Ascending aorta (tissue), 2 donors: ENCODE measurements at regions of chr14 and their contacts with region 1.

Region 1: GRCh38 chr14:92456215-92457015 is 57.2 kb upstream of the RIN3 start:
- DNase-seq: peak in 1 of 2 donors; percentile 77
- H3K4me3 ChIP-seq: no peak overlapping the region
- H3K27ac ChIP-seq: no peak overlapping the region
- H3K4me1 ChIP-seq: peaks cover 2 to 10% of the 10 kb centered on the region in 2 donors
- H3K27me3 ChIP-seq: no peaks in the 10 kb centered on the region
- CTCF ChIP-seq: peak; percentile 72 to 84 (median 79)

Region 2: GRCh38 chr14:92135267-92135666 is 321.1 kb before region 1 on chr14:
- intact Hi-C with region 1: loop called (anchors 1 kb)
- DNase-seq: no peak
- H3K4me3 ChIP-seq: no peak overlapping the region
- H3K27ac ChIP-seq: no peak overlapping the region
- H3K4me1 ChIP-seq: no peaks in the 10 kb centered on the region
- H3K27me3 ChIP-seq: no peaks in the 10 kb centered on the region
- CTCF ChIP-seq: peak; percentile 61 to 64 (median 64)

Region 3: GRCh38 chr14:92323011-92323915 is 133.2 kb before region 1 on chr14 and contains the start of gene SLC24A4:
- intact Hi-C with region 1: loop called (anchors 5 kb)
- DNase-seq: no peak
- H3K4me3 ChIP-seq: peak within 1 kb of the TSS; percentile 70 to 91
- H3K27ac ChIP-seq: peak within 1 kb of the TSS in 1 of 2 donors; percentile 42
- H3K4me1 ChIP-seq: peaks cover 0 to 9% of the 10 kb centered on the region in 2 donors
- H3K27me3 ChIP-seq: no peaks in the 10 kb centered on the region
- CTCF ChIP-seq: no peak
- total RNA-seq, gene SLC24A4: not detected

Region 4: GRCh38 chr14:92680781-92681650 is 224.6 kb after region 1 on chr14:
- intact Hi-C with region 1: loop called (anchors 2 kb)
- DNase-seq: peak; percentile 50 to 86
- H3K4me3 ChIP-seq: no peak overlapping the region
- H3K27ac ChIP-seq: peak overlapping the region in 1 of 2 donors; percentile 65
- H3K4me1 ChIP-seq: no peaks in the 10 kb centered on the region
- H3K27me3 ChIP-seq: no peaks in the 10 kb centered on the region
- CTCF ChIP-seq: peak; percentile 87 to 98 (median 94)